ENCODE measurements at regions of chr13 and their contacts with region 1.

Region 1: DNA sequence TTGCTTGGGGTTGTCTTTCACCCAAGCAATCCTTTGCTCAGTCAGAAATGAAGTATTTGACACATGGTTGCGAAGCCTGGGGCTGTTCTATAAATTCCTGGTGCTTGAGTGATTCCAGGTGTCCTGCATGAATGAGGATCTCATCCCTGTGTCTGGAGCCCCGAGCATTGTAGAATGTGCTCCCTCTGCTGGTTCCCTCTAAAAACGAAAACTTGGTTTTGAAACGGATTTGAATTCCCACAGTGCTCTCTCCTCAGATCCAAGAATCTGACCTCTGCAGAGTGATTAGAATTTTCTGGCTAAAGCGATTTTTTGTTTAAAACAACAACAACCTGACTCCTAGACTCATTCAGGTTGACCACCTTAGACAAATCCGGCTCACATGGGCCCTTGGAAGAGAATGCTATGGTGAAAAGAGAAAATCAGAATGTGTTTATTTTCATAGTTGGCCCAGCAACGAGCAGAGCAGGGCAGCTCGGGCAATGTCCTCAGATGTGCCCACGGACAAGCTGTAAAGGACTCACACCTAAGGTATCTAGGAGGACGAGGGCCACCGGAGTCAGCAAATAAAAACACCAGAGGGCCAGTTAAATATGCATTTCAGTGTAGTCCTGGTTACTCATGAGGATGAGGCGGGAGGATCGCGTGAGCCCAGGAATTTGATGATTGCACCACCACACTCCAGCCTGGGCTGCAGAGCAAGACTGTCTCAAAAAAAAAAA is 8.7 kb upstream of the ATP12A start:
- DNase-seq: peak; percentile 67
- ATAC-seq: peak; percentile 90
- H3K4me3 ChIP-seq: peak overlapping the region; percentile 23 to 40
- H3K27ac ChIP-seq: 0 out of 2 replicates have a peak overlapping the region, but pooled peaks have one; percentile 17
- H3K4me1 ChIP-seq: peaks cover 0 to 24% of the 10 kb centered on the region in 2 experiments; a peak in 2 of 4 replicates
- H3K27me3 ChIP-seq: no peaks in the 10 kb centered on the region
- CTCF ChIP-seq: peak; percentile 49 to 76 (median 64); a peak in 5 of 6 replicates
- POLR2A ChIP-seq: no peak
- RAD21 ChIP-seq: peak; percentile 54

Region 2: DNA sequence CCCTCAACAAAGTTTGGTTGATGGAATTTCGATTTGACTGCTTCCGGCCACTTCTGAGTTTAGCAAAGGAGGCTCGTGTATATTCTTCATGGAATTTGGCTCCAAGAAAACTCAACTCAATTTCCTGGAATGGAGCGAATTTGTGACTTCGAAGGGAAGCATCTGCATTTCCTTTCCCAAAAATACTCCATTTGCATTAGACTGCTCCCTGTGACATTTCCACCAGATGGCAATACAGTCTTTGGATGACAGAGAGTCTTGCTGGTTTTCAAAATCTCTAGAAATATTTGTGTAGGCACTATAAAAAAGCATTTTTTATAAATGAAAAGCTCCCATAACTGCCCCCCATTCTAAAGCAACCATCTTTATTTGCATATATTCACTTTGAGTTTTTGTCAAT is 358.1 kb before region 1 on chr13:
- CTCF ChIA-PET with region 1: no interaction called
- POLR2A ChIA-PET with region 1: no interaction called
- RAD21 ChIA-PET with region 1: no interaction called
- intact Hi-C with region 1: loop called (anchors 2 kb)
- DNase-seq: no peak
- ATAC-seq: no peak
- H3K4me3 ChIP-seq: no peak overlapping the region
- H3K27ac ChIP-seq: no peak overlapping the region
- H3K4me1 ChIP-seq: no peaks in the 10 kb centered on the region
- H3K27me3 ChIP-seq: no peaks in the 10 kb centered on the region
- CTCF ChIP-seq: peak; percentile 22 to 43 (median 26); a peak in 3 of 6 replicates
- POLR2A ChIP-seq: no peak
- RAD21 ChIP-seq: peak; percentile 54

Region 3: GRCh38 chr13:24574847-24575246 is 96.7 kb before region 1 on chr13:
- CTCF ChIA-PET with region 1: no interaction called
- POLR2A ChIA-PET with region 1: no interaction called
- RAD21 ChIA-PET with region 1: no interaction called
- intact Hi-C with region 1: loop called (anchors 1 kb)
- DNase-seq: no peak
- ATAC-seq: no peak
- H3K4me3 ChIP-seq: no peak overlapping the region
- H3K27ac ChIP-seq: no peak overlapping the region
- H3K4me1 ChIP-seq: no peaks in the 10 kb centered on the region
- H3K27me3 ChIP-seq: no peaks in the 10 kb centered on the region
- CTCF ChIP-seq: no peak
- POLR2A ChIP-seq: no peak
- RAD21 ChIP-seq: no peak

Region 4: GRCh38 chr13:24627099-24627714 is 44.3 kb before region 1 on chr13:
- CTCF ChIA-PET with region 1: interaction called, 3 read pairs
- POLR2A ChIA-PET with region 1: interaction called, 4 read pairs
- RAD21 ChIA-PET with region 1: no interaction called
- intact Hi-C with region 1: loop called (anchors 1 kb)
- DNase-seq: peak; percentile 4
- ATAC-seq: peak; percentile 94
- H3K4me3 ChIP-seq: no peak overlapping the region
- H3K27ac ChIP-seq: no peak overlapping the region
- H3K4me1 ChIP-seq: peaks cover 0 to 11% of the 10 kb centered on the region in 2 experiments; a peak in 2 of 4 replicates
- H3K27me3 ChIP-seq: no peaks in the 10 kb centered on the region
- CTCF ChIP-seq: peak; percentile 43 to 91 (median 76); a peak in 5 of 6 replicates
- POLR2A ChIP-seq: no peak
- RAD21 ChIP-seq: peak; percentile 46